PC-9 (cell line): ENCODE measurements at regions of chr7 and their contacts with region 1.

Region 1: DNA sequence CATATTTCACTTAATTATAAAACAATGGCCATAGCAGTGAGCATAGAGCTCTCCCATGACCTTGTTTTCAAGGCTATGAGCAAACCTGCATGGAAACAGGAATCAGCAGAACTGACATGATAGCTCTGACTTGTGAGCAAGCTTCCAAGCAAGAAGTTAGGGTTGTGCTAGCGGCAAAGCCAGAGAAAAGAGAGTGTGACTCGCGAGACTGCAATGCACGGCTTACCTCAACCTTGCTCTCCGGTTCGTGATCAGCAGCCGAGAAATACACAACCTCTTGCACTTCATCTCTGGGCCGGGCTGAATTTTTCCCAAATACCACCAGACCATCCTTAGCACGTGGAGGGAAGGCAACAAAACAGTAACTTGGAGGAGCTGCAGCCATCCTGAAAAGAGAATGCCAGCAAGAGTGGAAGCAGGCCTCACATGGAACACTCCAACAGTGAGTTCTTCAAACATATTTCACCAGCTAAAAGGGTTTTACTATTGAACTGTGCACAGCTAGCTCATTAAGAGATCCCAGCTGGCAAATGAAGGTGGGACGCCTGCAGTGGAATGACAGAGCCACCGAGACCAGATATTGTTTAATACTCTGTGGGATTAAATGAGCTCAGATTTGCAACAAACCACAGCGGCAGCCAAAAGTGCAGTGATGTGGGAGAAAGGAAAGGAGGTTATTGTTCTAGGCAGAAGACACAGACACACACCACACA is 20.8 kb downstream of the SCRN1 start:
- DNase-seq: no peak
- H3K4me3 ChIP-seq: no peak overlapping the region
- H3K27ac ChIP-seq: no peak overlapping the region
- H3K4me1 ChIP-seq: no peaks in the 10 kb centered on the region
- H3K27me3 ChIP-seq: no peaks in the 10 kb centered on the region
- CTCF ChIP-seq: no peak

Region 2: GRCh38 chr7:30080818-30081217 is 112.0 kb after region 1 on chr7:
- CTCF ChIA-PET with region 1: no interaction called
- POLR2A ChIA-PET with region 1: interaction called, 10 read pairs
- intact Hi-C with region 1: no loop called
- DNase-seq: no peak
- H3K4me3 ChIP-seq: no peak overlapping the region
- H3K27ac ChIP-seq: no peak overlapping the region
- H3K4me1 ChIP-seq: no peaks in the 10 kb centered on the region
- H3K27me3 ChIP-seq: no peaks in the 10 kb centered on the region
- CTCF ChIP-seq: no peak